MCF 10A (cell line): ENCODE measurements at regions of chr1 and their contacts with region 1.

Region 1: GRCh38 chr1:36911561-36912364 is 122.6 kb downstream of the GRIK3 start:
- DNase-seq: no peak
- H3K4me3 Mint-ChIP-seq: no peak overlapping the region
- H3K27ac Mint-ChIP-seq: no peak overlapping the region
- H3K4me1 Mint-ChIP-seq: no peaks in the 10 kb centered on the region
- H3K27me3 Mint-ChIP-seq: no peaks in the 10 kb centered on the region
- CTCF ChIP-seq: no peak

Region 2: DNA sequence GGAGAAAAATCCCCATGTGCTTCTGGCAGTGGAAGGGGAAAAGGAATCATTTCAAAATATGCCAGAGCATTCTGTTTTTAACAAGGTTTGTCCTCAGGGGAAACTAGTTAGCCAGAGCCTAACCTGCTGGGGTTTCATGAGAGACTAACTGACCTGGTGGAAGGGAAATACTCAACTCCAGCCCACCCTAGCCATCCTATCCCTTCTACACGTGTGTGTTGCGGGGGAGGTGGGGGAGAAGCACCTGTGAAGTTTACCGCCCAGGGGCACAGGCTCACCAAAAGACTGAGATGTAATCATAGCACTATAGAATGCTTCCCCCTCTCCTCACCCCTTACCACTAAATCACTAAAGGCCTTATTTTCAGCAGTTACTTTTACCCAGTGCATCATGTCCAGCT is 16.9 kb before region 1 on chr1:
- CTCF ChIA-PET with region 1: no interaction called
- POLR2A ChIA-PET with region 1: interaction called, 3 read pairs
- intact Hi-C with region 1: loop called (anchors 1 kb)
- DNase-seq: no peak
- H3K4me3 Mint-ChIP-seq: no peak overlapping the region
- H3K27ac Mint-ChIP-seq: no peak overlapping the region
- H3K4me1 Mint-ChIP-seq: no peaks in the 10 kb centered on the region
- H3K27me3 Mint-ChIP-seq: no peaks in the 10 kb centered on the region
- CTCF ChIP-seq: no peak